Activated CD4-positive, alpha-beta T cell treated with anti-CD3 and anti-CD28 coated beads, Interleukin-2, amount 10 ng/mL, durations not matched to agents 24 days and 14 days (primary cell): ENCODE measurements at regions of chr1 and their contacts with region 1.

Region 1: DNA sequence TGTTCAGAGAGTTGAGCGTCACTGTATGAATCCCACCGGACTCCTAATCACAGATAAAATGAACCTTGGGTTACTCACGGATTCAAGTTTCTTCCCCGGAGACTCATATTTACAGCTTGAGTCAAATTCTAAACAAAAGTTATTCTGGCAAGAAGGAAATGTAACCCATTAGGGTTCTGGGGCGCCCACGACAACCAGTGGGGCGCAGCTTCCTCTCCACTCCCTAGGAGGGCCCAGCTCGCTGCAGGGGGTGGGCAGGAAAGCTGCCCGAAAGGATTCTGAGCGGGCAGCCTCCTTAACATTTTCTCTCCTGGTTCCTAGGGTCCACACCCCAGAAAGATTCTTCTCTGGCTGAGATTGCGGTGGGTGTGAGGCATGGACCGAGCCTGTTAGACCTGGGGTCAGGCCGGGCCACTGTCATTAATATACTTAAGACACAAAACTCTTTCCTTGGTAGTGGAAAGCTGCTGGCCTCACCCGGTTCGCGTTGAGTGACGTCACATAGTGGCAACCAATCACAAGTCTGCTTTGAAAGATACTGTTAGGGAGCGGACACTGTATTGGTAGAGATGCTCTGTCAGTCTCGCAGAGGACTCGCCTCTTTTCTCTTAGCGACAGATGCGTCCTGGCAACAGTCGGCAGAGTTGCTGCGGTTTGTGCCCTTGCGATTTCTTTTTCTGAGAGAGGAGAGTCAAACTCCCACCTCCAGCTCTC is 13.6 kb upstream of the MCOLN3 start:
- DNase-seq: peak; percentile 97
- H3K4me3 Mint-ChIP-seq: peak overlapping the region; percentile 80
- H3K27ac Mint-ChIP-seq: peak overlapping the region; percentile 85
- H3K4me1 Mint-ChIP-seq: peaks cover 17% of the 10 kb centered on the region
- H3K27me3 Mint-ChIP-seq: peaks cover 35% of the 10 kb centered on the region

Region 2: DNA sequence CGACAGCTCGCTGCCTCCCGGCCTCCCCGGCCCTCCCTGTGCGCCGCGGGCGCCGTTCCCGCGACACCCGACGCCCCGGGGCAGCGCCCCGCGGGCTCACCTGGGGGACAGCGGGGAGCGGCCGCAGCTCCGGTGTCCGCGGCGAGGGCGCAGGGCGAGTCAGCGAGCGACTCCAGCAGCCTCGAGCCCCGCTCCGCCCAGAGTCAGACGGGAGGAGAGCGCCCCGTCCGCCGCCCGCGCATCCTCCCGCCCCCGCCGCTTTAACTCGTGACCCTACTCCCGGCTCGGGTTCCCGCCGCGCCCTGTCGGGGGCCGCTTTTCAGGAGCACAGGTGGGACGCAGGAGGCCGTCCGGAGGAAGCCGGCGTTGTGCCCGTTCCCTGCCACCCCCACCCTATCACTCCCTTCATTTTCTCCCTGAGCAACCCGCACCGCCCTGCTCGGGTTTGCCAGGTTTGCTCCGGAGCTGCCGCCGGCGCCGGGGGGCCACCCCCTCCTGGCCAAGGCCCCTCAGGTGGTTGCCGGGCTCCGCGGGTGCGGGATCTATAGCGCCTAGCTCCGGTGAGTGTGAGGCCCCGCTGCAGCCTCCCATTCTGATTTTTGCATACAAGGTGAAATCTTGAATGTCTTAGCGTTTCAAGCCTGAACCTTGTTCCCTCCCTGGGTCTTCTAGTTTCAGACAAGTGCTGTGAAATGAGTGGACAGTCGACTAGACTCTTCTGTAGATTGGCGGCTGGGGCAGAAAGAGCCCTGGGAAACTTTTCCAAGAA is 13.4 kb before region 1 on chr1 and contains the start of gene MCOLN3:
- intact Hi-C with region 1: loop called (anchors 1 kb)
- DNase-seq: peak; percentile 83
- H3K4me3 Mint-ChIP-seq: peak within 1 kb of the TSS; percentile 70
- H3K27ac Mint-ChIP-seq: peak within 1 kb of the TSS; percentile 21
- H3K4me1 Mint-ChIP-seq: peaks cover 26% of the 10 kb centered on the region
- H3K27me3 Mint-ChIP-seq: peaks cover 44% of the 10 kb centered on the region
- total RNA-seq, gene MCOLN3: 0.51 and 0.66 TPM in 2 replicates

Region 3: GRCh38 chr1:86082183-86082582 is 1020.3 kb after region 1 on chr1:
- intact Hi-C with region 1: no loop called
- DNase-seq: no peak
- H3K4me3 Mint-ChIP-seq: no peak overlapping the region
- H3K27ac Mint-ChIP-seq: no peak overlapping the region
- H3K4me1 Mint-ChIP-seq: peaks cover 2% of the 10 kb centered on the region
- H3K27me3 Mint-ChIP-seq: no peaks in the 10 kb centered on the region